ENCODE measurements at regions of chr19 and their contacts with region 1.

Region 1: DNA sequence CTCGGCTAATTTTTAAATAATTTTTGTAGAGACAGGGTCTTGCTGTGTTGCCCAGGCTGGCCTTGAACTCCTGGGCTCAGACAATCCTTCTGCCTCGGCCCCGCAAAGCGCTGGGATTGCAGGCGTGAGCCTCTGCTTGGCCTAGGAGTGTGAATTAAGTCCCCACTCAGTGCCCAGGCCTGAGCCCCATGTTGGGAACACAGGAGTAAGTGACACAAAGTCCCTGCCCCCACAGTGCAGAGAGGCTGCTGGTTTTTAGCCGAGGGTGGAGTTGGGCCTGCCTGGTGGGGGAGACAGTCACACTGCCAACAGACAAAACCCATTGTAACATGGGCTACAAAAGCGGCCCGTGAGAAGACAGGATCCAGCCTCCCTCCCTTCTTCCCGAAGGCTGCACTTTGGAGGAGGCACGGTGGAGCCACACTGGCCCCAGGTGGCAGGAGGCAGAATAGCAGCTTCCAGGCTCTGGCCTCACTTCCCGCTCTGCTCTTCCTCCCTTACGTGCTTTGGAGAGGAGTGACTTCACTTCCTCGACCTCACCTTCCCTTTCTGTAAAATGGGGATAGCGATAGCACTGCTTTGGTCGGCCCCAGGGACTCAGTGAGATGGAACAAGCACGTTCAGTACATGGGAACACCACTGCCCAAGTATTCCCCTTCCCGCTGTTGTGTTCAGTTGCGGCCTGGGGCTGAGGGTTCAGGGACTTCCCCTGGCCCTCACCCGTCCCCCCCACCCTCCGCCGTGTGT is 15.2 kb upstream of the EHD2 start:
- DNase-seq: peak; percentile 74
- H3K4me3 Mint-ChIP-seq: no peak overlapping the region
- H3K27ac Mint-ChIP-seq: no peak overlapping the region
- H3K4me1 Mint-ChIP-seq: no peaks in the 10 kb centered on the region
- H3K27me3 Mint-ChIP-seq: no peaks in the 10 kb centered on the region

Region 2: GRCh38 chr19:47687906-47688305 is 10.1 kb before region 1 on chr19:
- CTCF ChIA-PET with region 1: interaction called, 10 read pairs
- POLR2A ChIA-PET with region 1: no interaction called
- intact Hi-C with region 1: no loop called
- DNase-seq: no peak
- H3K4me3 Mint-ChIP-seq: no peak overlapping the region
- H3K27ac Mint-ChIP-seq: no peak overlapping the region
- H3K4me1 Mint-ChIP-seq: no peaks in the 10 kb centered on the region
- H3K27me3 Mint-ChIP-seq: no peaks in the 10 kb centered on the region

Region 3: DNA sequence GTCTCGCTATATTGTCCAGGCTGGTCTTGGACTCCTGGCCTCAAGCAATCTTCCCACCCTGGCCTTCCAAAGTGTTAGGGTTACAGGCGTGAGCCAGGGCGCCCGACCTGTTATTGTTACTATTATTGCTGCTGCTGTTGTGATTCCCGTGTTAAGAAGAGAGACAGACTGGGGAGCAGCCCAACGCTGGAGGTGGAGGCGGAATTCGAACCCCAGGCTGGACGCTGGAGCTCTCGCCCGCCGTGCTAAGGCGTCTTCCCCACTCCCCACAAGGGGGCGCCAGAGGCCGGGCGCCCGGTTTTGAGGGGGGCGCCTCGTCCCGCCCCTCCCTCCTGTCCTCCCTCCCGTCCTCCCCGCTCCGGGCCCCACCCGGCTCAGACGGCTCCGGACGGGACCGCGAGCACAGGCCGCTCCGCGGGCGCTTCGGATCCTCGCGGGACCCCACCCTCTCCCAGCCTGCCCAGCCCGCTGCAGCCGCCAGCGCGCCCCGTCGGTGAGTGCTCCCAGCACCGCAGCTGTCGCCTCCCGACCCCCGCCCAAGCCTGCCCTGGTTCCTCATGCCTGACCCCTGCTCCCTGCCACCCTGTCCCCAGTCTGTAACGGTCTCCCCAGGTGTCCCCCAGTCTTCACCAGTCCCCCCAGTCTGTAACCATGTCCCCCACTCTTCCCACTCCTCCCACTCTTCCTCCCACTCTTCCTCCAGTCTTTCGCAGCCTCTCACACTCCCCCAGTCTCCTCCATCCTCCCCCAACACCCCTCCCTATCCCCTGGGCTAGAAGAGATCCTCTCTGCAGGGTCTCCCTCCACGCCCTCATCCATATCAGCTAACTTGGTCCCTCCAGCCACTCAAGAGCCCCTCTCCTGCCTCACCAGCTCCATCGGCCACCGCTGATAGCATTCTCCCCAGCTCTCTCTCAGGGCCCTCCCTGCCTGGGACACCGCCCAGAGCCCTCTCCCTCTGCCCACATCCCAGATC is 15.3 kb after region 1 on chr19 and contains the start of gene EHD2:
- CTCF ChIA-PET with region 1: interaction called, 26 read pairs
- POLR2A ChIA-PET with region 1: no interaction called
- intact Hi-C with region 1: no loop called
- DNase-seq: peak; percentile 64
- H3K4me3 Mint-ChIP-seq: peak within 1 kb of the TSS; percentile 14
- H3K27ac Mint-ChIP-seq: no peak within 1 kb of the TSS
- H3K4me1 Mint-ChIP-seq: no peaks in the 10 kb centered on the region
- H3K27me3 Mint-ChIP-seq: peaks cover 26% of the 10 kb centered on the region
- total RNA-seq, gene EHD2: 0.81 to 1.6 TPM